ENCODE measurements at regions of chr13 and their contacts with region 1.

Region 1: DNA sequence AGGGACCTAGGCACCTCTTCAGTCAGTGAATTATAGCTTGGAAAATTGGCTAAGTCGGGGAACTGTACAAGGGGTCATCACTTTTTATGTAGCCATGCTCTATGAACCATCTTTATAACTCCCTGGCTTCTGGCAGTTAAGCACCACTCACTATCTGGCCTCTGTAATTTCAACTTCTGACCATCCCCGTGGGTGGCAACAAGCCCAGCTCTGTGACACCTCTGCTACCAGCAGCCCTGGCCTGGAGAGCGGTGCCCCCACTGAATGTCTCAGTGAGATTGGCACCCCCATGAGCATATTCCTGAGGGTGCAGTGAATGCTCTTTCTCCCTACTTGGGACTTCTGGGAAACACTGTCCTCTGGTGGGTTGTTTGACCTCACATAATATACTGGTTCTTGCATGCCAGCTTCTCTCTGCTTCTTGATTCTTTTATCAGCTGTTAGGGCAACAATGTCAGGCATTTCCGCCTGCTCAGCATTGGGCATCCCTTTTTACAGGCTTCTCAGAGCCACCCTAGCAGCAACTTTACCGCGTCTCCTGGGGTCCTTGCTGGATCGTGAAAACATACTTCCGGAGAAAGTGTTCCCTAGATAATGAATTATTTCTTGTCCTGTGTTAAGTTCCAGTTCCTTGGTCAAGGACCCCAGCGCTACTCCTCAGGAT is 10.4 kb downstream of the KL start:
- DNase-seq: no peak
- H3K4me3 ChIP-seq: no peak overlapping the region
- H3K27ac ChIP-seq: no peak overlapping the region
- H3K4me1 ChIP-seq: no peaks in the 10 kb centered on the region
- H3K27me3 ChIP-seq: no peaks in the 10 kb centered on the region
- CTCF ChIP-seq: no peak
- POLR2A ChIP-seq: no peak

Region 2: GRCh38 chr13:32362574-32362973 is 664.0 kb before region 1 on chr13:
- intact Hi-C with region 1: no loop called
- DNase-seq: no peak
- H3K4me3 ChIP-seq: no peak overlapping the region
- H3K27ac ChIP-seq: no peak overlapping the region
- H3K4me1 ChIP-seq: no peaks in the 10 kb centered on the region
- H3K27me3 ChIP-seq: no peaks in the 10 kb centered on the region
- CTCF ChIP-seq: no peak
- POLR2A ChIP-seq: no peak

Region 3: GRCh38 chr13:32415019-32415418 is 611.6 kb before region 1 on chr13:
- intact Hi-C with region 1: no loop called
- DNase-seq: no peak
- H3K4me3 ChIP-seq: no peak overlapping the region
- H3K27ac ChIP-seq: no peak overlapping the region
- H3K4me1 ChIP-seq: peaks cover 4% of the 10 kb centered on the region
- H3K27me3 ChIP-seq: no peaks in the 10 kb centered on the region
- CTCF ChIP-seq: no peak
- POLR2A ChIP-seq: no peak

Region 4: GRCh38 chr13:32840989-32841713 is 185.5 kb before region 1 on chr13:
- intact Hi-C with region 1: loop called (anchors 5 kb)
- DNase-seq: no peak
- H3K4me3 ChIP-seq: no peak overlapping the region
- H3K27ac ChIP-seq: no peak overlapping the region
- H3K4me1 ChIP-seq: peaks cover 4% of the 10 kb centered on the region
- H3K27me3 ChIP-seq: no peaks in the 10 kb centered on the region
- CTCF ChIP-seq: no peak
- POLR2A ChIP-seq: no peak

Region 5: GRCh38 chr13:32881074-32881780 is 145.4 kb before region 1 on chr13:
- intact Hi-C with region 1: no loop called
- DNase-seq: peak in 1 of 2 donors; percentile 83
- H3K4me3 ChIP-seq: no peak overlapping the region
- H3K27ac ChIP-seq: no peak overlapping the region
- H3K4me1 ChIP-seq: peaks cover 5% of the 10 kb centered on the region
- H3K27me3 ChIP-seq: no peaks in the 10 kb centered on the region
- CTCF ChIP-seq: no peak
- POLR2A ChIP-seq: no peak

Region 6: GRCh38 chr13:32955881-32956594 is 70.6 kb before region 1 on chr13:
- intact Hi-C with region 1: no loop called
- DNase-seq: peak in 1 of 2 donors; percentile 29
- H3K4me3 ChIP-seq: no peak overlapping the region
- H3K27ac ChIP-seq: no peak overlapping the region
- H3K4me1 ChIP-seq: no peaks in the 10 kb centered on the region
- H3K27me3 ChIP-seq: no peaks in the 10 kb centered on the region
- CTCF ChIP-seq: no peak
- POLR2A ChIP-seq: no peak